ENCODE measurements at regions of chr1 and their contacts with region 1.

Region 1: DNA sequence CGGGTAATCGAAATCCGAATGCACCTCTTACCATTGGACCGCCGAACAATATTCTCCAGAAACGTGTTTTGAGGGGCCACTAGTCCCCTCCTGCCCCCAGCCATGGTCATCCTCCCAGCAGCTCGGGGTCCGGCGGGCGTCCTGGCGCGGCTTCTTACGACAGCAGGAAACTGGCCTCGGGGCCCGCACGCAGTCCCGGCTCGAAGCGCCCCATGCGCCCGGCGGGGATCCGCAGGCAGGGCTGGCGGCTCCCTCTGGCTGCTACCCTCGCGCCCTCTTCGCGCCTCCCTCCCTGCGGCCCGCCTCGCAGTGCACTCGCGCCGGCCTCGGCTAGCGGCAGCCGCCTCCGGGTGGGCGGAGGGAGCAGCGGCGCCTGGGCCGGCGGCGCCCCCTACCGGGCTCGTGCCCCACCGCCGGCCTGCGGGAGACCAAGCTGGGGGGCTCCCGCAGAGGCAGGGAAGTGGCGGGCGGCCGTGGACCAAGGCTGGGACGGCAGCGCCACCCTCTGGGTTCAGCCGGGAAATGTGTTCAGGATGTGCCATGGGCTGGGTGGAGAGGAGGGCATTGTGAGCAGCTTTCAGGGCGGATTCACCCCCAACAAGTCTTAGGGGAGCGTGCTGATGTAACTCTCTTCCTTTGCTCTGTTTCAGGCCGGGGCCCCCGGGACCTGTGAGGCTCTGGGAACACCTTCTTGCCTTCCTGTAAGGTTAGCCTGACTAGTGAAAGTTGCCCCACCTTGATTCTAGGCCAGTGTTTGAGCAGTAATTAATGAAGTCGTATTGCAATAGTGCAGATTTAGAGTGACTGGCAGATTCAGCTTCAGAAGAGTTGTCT is at the start of gene KCNH1:
- DNase-seq: peak; percentile 45 to 91 (median 68)
- ATAC-seq: peak; percentile 94 to 97 (median 96)
- H3K4me3 ChIP-seq: peak within 1 kb of the TSS; percentile 11 to 44 (median 22)
- H3K27ac ChIP-seq: no peak within 1 kb of the TSS
- H3K4me1 ChIP-seq: peaks cover 0 to 10% (median 0%) of the 10 kb centered on the region in 3 donors
- H3K27me3 ChIP-seq: peaks cover 0 to 18% (median 0%) of the 10 kb centered on the region in 4 donors
- CTCF ChIP-seq: peak; percentile 61 to 87 (median 76)
- total RNA-seq, gene KCNH1: 0.24 to 0.49 (median 0.31) TPM

Region 2: DNA sequence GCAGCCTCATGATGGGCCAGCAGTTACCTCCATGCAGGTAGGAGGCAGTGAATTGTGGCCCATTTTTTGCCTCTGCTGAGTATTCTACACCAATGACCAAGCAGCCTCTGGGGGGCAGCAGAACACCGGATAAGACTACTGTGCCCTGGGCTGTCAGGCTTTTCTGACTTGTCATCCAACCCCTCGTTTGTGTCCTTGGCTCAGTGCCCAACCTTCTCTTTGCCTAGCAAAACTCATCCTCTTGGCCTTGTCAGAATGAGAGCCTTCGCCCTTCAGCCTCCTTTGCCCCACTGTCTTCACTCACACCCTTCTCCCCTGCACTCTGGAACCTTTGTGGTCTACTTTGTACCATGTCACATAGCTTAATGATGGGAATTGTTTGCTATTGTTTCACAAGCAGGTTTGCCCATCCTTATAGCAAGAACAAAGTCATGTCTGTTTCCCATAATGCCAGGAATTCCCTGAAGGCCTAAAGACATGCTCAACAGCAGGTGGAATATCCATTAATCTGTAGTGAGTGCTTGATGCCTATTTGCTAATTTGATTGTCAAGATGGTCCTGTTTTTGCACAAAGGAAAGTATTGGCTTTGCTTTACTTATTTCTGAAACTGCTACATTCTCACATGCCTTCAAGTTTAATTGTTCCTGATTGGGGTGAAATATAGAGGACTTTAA is 549.5 kb before region 1 on chr1:
- intact Hi-C with region 1: loop called in 2 of 3 experiments (anchors 10 kb)
- DNase-seq: peak; percentile 54 to 76 (median 66)
- ATAC-seq: peak; percentile 74 to 95 (median 92)
- H3K4me3 ChIP-seq: no peak overlapping the region
- H3K27ac ChIP-seq: no peak overlapping the region
- H3K4me1 ChIP-seq: no peaks in the 10 kb centered on the region
- H3K27me3 ChIP-seq: no peaks in the 10 kb centered on the region
- CTCF ChIP-seq: peak in 3 of 4 donors; percentile 27 to 59 (median 55)